BJ (cell line): ENCODE measurements at regions of chr2 and their contacts with region 1.

Region 1: DNA sequence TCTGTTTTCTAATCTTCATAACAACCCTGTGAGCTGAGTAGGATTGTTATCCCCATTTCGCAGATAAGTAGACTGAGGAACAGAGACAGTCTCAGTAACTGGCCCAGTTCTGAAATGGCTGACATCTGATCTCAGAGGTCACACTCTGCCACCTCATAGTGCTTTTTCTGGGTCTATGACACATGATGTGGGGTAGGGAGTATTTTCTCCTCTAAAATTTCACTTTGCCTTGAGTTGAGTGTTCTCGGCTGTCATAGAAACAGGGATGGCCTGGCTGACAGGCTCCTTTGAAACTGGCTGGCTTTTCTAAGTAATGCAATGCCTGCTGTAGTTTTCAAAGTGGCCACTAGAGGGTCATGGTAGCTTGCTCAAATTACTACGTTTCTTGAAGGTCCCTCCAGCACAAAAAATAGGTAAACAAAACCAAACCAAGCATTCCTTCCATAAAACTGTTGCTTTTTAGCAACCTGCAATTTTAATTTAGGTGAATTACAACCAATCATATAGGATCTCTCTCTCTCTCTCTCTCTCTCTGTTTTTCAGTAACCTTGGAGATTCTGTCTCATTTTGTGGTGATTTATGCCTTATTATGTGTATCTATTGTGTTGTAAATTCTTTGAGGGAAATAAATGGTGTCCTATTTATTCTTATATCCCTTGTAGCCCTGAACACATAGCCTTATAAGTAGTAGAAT is 84.2 kb upstream of the TTN start:
- DNase-seq: no peak
- H3K4me3 ChIP-seq: no peak overlapping the region
- H3K27me3 ChIP-seq: no peaks in the 10 kb centered on the region
- CTCF ChIP-seq: peak; percentile 93

Region 2: DNA sequence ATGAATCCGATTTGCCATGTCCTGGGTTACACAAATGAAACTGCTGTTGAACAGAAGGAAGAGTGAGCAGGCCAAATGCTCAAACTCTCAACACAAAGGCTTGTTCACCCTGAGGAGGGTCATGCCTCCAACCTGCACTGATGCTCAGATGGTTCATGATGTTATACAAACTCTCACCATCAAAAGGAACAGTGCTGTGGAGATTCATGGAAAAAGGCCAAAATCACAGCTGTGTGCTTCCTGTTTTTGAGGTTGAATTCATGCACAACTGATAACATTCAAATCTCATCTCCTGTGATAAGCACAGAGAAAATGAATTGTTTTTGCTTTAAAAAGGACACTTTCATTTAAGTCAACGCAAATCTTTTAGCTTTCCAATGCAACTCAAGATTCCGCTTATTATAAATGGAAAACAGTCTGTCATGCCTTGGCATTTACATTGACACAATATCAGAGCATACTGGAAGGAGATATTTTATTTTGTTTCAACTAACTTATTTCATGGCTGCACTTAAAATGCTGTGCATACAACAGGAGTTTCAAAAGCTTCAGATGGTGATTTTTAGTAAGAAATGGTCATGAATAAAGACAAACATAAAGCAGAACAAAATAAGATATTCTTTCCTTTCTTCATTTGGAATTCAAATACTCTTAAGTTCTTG is 62.0 kb before region 1 on chr2:
- CTCF ChIA-PET with region 1: no interaction called
- POLR2A ChIA-PET with region 1: no interaction called
- DNase-seq: no peak
- H3K4me3 ChIP-seq: no peak overlapping the region
- H3K27me3 ChIP-seq: 0 out of 2 replicates have a peak, but pooled peaks cover 2% of the 10 kb centered on the region
- CTCF ChIP-seq: no peak

Region 3: DNA sequence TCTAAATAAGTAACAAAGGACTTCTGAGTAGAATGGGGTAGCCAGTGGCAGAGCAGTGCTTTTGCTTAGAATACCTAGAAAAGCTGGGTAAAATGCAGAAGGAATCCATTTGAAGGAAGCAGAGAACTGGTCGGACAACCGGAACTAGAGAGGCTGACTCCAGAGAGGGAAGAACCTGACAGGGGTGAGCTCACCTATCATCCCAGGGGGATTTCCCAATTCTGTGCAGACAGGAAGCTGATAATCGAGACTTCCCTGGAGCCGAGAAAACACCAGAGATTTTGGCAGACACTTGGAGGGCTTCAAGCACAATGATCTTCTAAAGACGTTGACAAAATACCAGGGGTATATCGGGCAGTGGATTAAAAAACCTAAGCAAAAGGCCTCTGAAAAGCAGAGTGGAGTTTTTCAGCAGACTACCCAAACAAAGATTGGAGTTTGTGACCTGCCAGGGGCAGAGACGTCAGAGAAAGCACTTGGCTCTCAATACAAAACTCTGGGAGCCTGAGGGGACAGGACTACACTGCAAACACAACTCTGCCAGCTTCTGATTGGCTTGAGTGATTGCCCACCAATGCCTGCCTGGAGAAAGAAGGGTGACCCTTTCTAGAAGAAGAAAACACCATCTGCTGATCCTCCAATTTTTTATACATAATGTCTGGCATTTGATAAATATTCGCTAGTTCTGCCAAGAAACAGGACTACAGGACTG is 16.7 kb before region 1 on chr2:
- CTCF ChIA-PET with region 1: interaction called, 19 read pairs
- POLR2A ChIA-PET with region 1: no interaction called
- DNase-seq: no peak
- H3K4me3 ChIP-seq: no peak overlapping the region
- H3K27me3 ChIP-seq: no peaks in the 10 kb centered on the region
- CTCF ChIP-seq: no peak